Endothelial cell of umbilical vein (primary cell): ENCODE measurements at regions of chr19 and their contacts with region 1.

Region 1: DNA sequence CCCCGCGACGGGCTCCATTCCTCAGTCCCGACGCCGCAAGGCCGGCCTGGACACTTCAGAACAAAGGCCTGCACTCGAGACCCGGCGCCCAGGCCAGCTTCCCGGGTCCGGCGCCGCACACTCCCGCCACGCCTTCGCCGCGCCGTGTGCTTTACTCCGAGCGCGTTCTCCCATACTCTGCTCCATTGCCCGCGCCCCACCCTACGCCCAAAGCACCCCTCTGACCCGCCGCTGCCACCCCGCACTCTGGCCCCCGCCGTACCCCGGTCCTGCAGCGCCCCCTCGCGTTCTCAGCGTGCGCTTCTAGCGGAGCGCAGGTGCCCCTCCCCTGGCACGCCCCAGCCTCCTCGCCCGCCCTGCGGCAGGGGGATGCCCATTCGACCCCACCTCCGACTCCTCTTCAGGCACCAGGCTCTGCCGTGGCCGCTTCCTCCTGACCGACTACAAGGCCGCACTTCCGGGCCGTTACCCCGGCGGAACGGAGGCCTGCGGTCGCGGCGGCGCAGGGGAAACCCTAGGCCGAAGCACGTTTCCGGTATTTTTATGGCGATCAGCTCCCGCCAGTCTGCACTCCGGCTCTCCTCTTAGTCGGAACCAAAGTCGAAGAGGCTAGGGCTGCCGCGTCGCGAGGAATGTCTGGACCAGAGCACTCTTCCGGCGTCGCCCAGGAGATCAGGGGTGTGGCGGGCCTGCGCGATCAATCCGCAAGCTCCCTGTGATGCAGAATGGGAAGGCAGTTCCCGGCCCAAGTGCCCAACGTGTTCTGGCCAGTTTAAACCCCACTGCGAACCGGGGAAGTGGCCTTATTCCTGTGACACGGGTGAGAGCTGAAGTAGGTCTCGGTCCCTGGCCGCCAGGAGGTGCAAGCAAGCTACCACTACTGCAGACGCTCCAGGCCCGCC is at the start of gene ZBTB45:
- DNase-seq: peak; percentile 94
- H3K4me3 ChIP-seq: peak within 1 kb of the TSS; percentile 67 to 83 (median 73)
- H3K27ac ChIP-seq: peak within 1 kb of the TSS; percentile 69
- H3K4me1 ChIP-seq: peaks cover 19% of the 10 kb centered on the region
- H3K27me3 ChIP-seq: no peaks in the 10 kb centered on the region
- CTCF ChIP-seq: peak; percentile 69 to 90
- POLR2A ChIP-seq: peak; percentile 64
- total RNA-seq, gene ZBTB45: 21.8 TPM in 2 replicates

Region 2: GRCh38 chr19:58228585-58229254 is 290.9 kb before region 1 on chr19 and contains the start of gene ZNF544:
- CTCF ChIA-PET with region 1: no interaction called
- POLR2A ChIA-PET with region 1: no interaction called
- dilution Hi-C with region 1: no loop called
- intact Hi-C with region 1: loop called (anchors 2 kb)
- DNase-seq: peak; percentile 84
- H3K4me3 ChIP-seq: peak within 1 kb of the TSS; percentile 53 to 66 (median 61)
- H3K27ac ChIP-seq: peak within 1 kb of the TSS; percentile 42
- H3K4me1 ChIP-seq: peaks cover 10% of the 10 kb centered on the region
- H3K27me3 ChIP-seq: no peaks in the 10 kb centered on the region
- CTCF ChIP-seq: peak; percentile 6 to 40
- POLR2A ChIP-seq: peak; percentile 92
- total RNA-seq, gene ZNF544: 39.3 and 45.4 TPM in 2 replicates

Region 3: GRCh38 chr19:58499021-58499927 is 20.3 kb before region 1 on chr19:
- CTCF ChIA-PET with region 1: interaction called, 13 read pairs
- POLR2A ChIA-PET with region 1: no interaction called
- dilution Hi-C with region 1: no loop called
- intact Hi-C with region 1: loop called (anchors 1 kb)
- DNase-seq: peak; percentile 96
- H3K4me3 ChIP-seq: peak overlapping the region in 2 of 3 experiments; percentile 24 to 45
- H3K27ac ChIP-seq: no peak overlapping the region
- H3K4me1 ChIP-seq: peaks cover 4% of the 10 kb centered on the region
- H3K27me3 ChIP-seq: no peaks in the 10 kb centered on the region
- CTCF ChIP-seq: peak; percentile 19 to 43
- POLR2A ChIP-seq: peak; percentile 73

Region 4: DNA sequence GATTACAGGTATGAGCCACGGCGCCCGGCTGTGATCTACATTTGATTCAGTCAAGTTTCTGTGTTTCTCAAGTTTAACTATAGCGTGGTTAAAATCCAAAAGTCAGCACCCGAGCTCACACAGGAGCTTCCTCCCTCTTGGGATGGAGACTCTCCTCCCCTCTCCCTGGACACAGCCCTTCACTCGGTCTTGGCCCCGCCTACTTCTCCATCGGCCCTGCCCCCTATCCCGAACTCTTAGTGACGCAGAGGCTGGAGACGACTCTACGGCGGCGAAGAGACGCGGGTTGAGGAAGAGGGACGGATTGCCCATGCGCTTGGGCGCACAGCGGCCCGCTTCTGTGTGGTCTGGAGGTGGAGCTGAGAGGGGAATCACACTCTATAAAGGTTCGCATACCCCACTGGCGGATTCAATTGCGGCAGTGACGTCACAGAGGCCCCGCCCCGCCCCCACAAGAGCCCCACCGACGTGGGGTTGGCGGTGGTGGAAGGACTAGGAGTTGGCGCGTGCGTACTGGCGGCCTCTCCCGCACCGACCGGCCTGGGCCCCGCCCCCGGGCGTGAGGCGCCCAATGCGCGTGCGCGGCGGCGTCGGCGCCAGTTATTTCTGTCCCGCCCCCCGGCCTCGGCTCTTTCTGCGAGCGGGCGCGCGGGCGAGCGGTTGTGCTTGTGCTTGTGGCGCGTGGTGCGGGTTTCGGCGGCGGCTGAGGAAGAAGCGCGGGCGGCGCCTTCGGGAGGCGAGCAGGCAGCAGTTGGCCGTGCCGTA is 24.4 kb after region 1 on chr19 and contains the start of gene TRIM28:
- CTCF ChIA-PET with region 1: interaction called, 52 read pairs
- POLR2A ChIA-PET with region 1: interaction called, 20 read pairs
- dilution Hi-C with region 1: no loop called
- intact Hi-C with region 1: loop called (anchors 1 kb)
- DNase-seq: peak; percentile 99
- H3K4me3 ChIP-seq: peak within 1 kb of the TSS; percentile 82 to 94 (median 85)
- H3K27ac ChIP-seq: peak within 1 kb of the TSS; percentile 87
- H3K4me1 ChIP-seq: peaks cover 15% of the 10 kb centered on the region
- H3K27me3 ChIP-seq: peaks cover 8 to 10% of the 10 kb centered on the region in 2 experiments
- CTCF ChIP-seq: no peak
- POLR2A ChIP-seq: peak; percentile 83
- total RNA-seq, gene TRIM28: 377 and 429 TPM in 2 replicates

Region 5: DNA sequence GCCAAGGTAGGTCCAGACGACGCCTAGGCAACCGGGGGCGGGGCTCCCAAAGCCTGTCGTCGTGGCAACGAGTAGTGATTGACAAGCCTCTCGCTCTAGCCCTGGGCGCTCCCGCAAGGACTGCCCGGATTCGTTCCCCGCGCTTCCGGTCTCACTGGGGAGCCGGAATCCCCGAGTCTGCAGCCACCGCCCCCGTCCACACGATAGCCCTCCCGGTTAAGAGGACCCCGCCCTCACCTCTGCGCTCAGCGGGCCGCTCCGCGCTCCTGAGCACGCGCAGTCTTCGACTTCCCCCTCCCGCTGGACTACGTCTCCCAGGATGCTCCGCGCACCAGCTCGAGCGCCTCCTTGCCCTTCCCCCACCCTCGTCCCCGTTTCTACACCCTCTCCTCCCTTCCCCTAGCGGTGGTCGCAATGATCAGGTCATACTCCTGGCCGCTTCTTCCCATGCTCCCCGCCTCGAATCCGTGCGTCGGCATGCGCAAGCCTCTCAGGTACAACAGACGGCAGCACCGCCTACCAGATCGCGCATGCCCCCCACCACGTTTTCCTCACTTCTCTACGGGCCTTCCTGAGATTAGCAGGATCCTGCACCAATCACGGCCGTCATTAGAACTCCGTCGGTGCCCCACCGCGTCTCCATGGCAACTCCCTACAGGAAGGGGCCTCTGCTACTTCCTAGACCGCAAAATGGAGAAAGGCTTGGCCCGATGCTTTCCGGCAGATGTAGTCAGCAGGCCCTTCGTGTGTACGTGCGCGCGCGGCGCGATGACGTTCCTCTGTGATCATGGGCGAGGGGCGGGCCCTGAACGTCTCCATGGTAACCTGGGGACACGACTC is 53.4 kb after region 1 on chr19 and contains the start of gene MZF1:
- CTCF ChIA-PET with region 1: interaction called, 111 read pairs
- POLR2A ChIA-PET with region 1: interaction called, 17 read pairs
- dilution Hi-C with region 1: no loop called
- intact Hi-C with region 1: loop called (anchors 1 kb)
- DNase-seq: peak; percentile 100
- H3K4me3 ChIP-seq: peak within 1 kb of the TSS; percentile 7 to 70 (median 58)
- H3K27ac ChIP-seq: peak within 1 kb of the TSS; percentile 85
- H3K4me1 ChIP-seq: peaks cover 16% of the 10 kb centered on the region
- H3K27me3 ChIP-seq: no peaks in the 10 kb centered on the region
- CTCF ChIP-seq: peak; percentile 6 to 23
- POLR2A ChIP-seq: no peak
- total RNA-seq, gene MZF1: 18.8 and 26.4 TPM in 2 replicates